PC-9 (cell line): ENCODE measurements at regions of chr6 and their contacts with region 1.

Region 1: GRCh38 chr6:136226027-136226673 is 24.0 kb downstream of the MTFR2 start:
- DNase-seq: peak; percentile 36 to 52
- H3K4me3 ChIP-seq: peak overlapping the region; percentile 49
- H3K27ac ChIP-seq: peak overlapping the region; percentile 69
- H3K4me1 ChIP-seq: peaks cover 6% of the 10 kb centered on the region
- H3K27me3 ChIP-seq: no peaks in the 10 kb centered on the region
- CTCF ChIP-seq: peak; percentile 100

Region 2: DNA sequence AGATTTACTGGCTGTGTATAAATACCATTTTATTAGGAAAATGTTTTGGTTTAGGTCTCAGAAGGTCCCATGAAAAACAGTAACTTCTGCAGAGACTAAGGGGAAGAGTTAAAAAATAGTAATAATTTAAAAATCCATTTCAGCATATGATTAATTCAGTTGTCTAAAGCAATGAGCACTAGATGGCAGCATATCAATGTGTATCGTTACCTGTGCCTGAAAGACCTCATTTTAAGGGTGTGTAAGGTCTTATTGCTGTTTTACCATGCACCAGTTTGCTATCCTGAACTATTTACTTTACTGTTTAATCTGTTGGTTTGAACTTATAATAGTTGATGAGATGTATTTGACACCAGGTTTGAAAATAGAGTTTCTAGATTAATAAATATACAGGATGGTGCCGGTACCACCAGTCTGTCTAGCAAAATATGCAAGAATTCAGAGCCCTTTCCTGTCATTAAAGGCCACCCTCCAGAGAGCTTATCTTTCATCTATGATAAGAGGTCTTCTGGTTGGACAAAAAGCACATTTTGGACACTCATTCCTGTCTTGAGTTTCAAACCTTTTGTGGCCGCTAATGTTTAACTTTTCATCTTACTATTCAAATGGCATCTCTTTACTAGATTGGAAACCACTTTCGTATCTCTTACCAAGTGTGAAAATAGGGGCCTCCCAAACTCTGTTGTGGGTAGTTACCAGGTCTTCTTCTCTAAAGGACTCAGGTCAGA is 719.7 kb before region 1 on chr6:
- CTCF ChIA-PET with region 1: no interaction called
- POLR2A ChIA-PET with region 1: no interaction called
- intact Hi-C with region 1: loop called (anchors 1 kb)
- DNase-seq: peak; percentile 3 to 45
- H3K4me3 ChIP-seq: no peak overlapping the region
- H3K27ac ChIP-seq: no peak overlapping the region
- H3K4me1 ChIP-seq: no peaks in the 10 kb centered on the region; the same call in 1 of the 2 replicates
- H3K27me3 ChIP-seq: no peaks in the 10 kb centered on the region
- CTCF ChIP-seq: peak; percentile 81

Region 3: GRCh38 chr6:135675862-135676261 is 550.3 kb before region 1 on chr6:
- CTCF ChIA-PET with region 1: no interaction called
- POLR2A ChIA-PET with region 1: no interaction called
- intact Hi-C with region 1: loop called (anchors 1 kb)
- DNase-seq: no peak
- H3K4me3 ChIP-seq: no peak overlapping the region
- H3K27ac ChIP-seq: no peak overlapping the region
- H3K4me1 ChIP-seq: peaks cover under 1% of the 10 kb centered on the region; the same call in 1 of the 2 replicates
- H3K27me3 ChIP-seq: no peaks in the 10 kb centered on the region
- CTCF ChIP-seq: peak; percentile 57; the same call in 1 of the 2 replicates

Region 4: GRCh38 chr6:136249811-136250685 is 23.9 kb after region 1 on chr6 and contains the start of gene MTFR2:
- CTCF ChIA-PET with region 1: no interaction called
- POLR2A ChIA-PET with region 1: no interaction called
- intact Hi-C with region 1: no loop called
- DNase-seq: peak; percentile 93 to 100
- H3K4me3 ChIP-seq: peak within 1 kb of the TSS; percentile 79
- H3K27ac ChIP-seq: peak within 1 kb of the TSS; percentile 13; the same call in 1 of the 2 replicates
- H3K4me1 ChIP-seq: peaks cover 20% of the 10 kb centered on the region
- H3K27me3 ChIP-seq: no peaks in the 10 kb centered on the region
- CTCF ChIP-seq: no peak
- total RNA-seq, gene MTFR2: 10.5 and 12.6 TPM in 2 replicates